Endothelial cell of umbilical vein (primary cell): ENCODE measurements at regions of chr19 and their contacts with region 1.

Region 1: DNA sequence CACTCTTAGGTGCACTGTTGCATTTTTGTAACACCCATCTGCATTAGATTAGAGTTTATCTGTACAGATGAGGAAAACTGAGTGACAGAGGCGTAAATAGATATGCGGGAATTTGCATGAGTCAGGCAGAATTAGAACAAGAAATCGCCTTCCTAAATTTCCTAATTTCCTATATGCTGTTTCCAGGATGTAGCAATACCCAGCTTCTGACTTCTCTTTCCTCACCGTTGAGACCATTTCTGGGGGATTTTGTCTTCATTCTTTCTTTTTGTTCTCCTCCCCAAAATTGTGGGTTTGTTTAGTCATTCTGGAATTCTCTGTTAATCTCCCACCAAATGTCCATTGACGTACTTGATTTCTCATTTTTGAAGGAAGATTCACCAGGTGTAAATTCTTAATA is 10.6 kb upstream of the ZNF792 start:
- DNase-seq: no peak
- H3K4me3 ChIP-seq: no peak overlapping the region
- H3K27ac ChIP-seq: no peak overlapping the region
- H3K4me1 ChIP-seq: no peaks in the 10 kb centered on the region
- H3K27me3 ChIP-seq: no peaks in the 10 kb centered on the region
- CTCF ChIP-seq: no peak
- POLR2A ChIP-seq: no peak

Region 2: DNA sequence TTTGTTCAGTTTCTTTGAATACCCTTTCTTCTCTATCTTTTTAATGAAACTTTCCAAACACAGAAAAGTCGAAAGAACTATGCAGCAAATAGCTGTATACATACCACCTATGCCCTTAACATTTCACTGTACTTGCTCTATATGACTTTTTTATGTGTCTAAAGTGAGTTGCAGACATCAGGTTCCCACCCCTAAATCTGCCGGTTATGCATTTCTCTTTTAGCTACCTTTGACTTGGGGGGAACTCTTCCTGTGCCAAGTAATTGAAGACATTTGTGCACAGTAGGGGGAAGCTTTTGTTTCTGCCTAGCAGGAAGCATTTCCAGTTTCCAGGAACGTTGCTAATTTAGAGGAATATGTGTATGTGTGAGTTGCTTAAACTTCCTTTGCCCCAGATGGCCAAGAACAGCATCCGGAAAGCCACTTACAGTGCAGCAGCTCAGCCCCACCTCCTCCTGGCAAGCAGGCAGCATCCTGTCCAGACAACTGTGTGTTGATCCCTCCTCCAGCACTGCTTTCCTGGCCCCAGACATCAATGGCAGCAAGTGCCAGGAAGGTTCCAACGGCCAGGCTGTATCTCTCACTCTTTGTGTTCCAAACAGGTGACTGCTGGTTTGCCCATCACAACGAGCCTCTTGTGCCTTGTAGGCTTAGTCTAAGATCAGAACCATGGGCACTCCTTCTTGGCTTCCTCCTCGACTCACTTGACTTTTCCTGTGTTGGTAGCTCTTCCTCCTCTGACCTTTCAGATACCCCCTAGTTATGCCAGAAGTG is 10.8 kb after region 1 on chr19:
- CTCF ChIA-PET with region 1: interaction called, 11 read pairs
- POLR2A ChIA-PET with region 1: no interaction called
- dilution Hi-C with region 1: no loop called
- intact Hi-C with region 1: no loop called
- DNase-seq: peak; percentile 89
- H3K4me3 ChIP-seq: peak overlapping the region in 1 of 3 experiments; percentile 0
- H3K27ac ChIP-seq: peak overlapping the region; percentile 34
- H3K4me1 ChIP-seq: peaks cover 15% of the 10 kb centered on the region
- H3K27me3 ChIP-seq: no peaks in the 10 kb centered on the region
- CTCF ChIP-seq: no peak
- POLR2A ChIP-seq: no peak

Region 3: GRCh38 chr19:34999498-35000341 is 25.1 kb after region 1 on chr19 and contains the start of gene GRAMD1A:
- CTCF ChIA-PET with region 1: interaction called, 40 read pairs
- POLR2A ChIA-PET with region 1: interaction called, 8 read pairs
- dilution Hi-C with region 1: no loop called
- intact Hi-C with region 1: loop called (anchors 1 kb)
- DNase-seq: peak; percentile 87
- H3K4me3 ChIP-seq: peak within 1 kb of the TSS; percentile 75 to 91 (median 83)
- H3K27ac ChIP-seq: peak within 1 kb of the TSS; percentile 89
- H3K4me1 ChIP-seq: peaks cover 66% of the 10 kb centered on the region
- H3K27me3 ChIP-seq: no peaks in the 10 kb centered on the region
- CTCF ChIP-seq: no peak
- POLR2A ChIP-seq: peak; percentile 84
- total RNA-seq, gene GRAMD1A: 130 and 139 TPM in 2 replicates

Region 4: DNA sequence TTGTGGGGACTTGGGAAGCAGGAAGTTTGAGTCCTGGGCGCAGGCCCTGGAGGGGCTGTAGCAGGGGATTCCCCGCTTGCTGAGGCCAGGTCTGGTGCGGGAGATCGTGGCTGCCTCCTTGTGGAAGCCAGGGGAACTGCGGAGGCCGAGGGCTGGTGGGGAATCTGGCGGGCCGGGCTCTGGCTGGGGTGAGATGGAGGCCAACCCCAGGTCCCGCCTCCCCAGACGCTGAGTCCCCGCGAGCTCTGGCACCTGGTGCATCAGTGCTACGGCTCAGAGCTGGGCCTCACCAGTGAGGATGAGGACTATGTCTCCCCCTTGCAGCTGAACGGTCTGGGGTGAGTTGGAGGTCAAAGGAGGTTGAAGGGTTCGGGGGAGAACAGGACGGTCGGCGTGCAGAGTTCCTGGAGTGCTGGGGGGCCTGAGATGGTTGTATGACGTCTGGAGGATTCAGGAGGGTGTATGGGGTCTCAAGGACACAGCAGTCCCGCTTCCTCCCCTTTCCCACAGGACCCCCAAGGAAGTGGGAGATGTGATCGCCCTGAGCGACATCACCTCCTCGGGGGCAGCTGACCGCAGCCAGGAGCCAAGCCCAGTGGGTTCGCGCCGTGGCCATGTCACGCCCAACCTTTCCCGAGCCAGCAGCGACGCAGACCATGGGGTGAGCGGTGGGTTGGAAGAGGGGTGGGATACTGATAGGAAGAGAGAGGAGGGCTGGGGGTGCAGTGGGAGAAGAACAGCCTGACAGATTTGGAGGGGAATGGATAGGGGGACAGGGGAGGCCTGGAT is 38.6 kb after region 1 on chr19:
- CTCF ChIA-PET with region 1: interaction called, 129 read pairs
- POLR2A ChIA-PET with region 1: no interaction called
- dilution Hi-C with region 1: no loop called
- intact Hi-C with region 1: loop called (anchors 1 kb)
- DNase-seq: peak; percentile 75
- H3K4me3 ChIP-seq: no peak overlapping the region
- H3K27ac ChIP-seq: peak overlapping the region; percentile 10
- H3K4me1 ChIP-seq: peaks cover 3% of the 10 kb centered on the region
- H3K27me3 ChIP-seq: no peaks in the 10 kb centered on the region
- CTCF ChIP-seq: peak; percentile 98 to 99
- POLR2A ChIP-seq: no peak

Region 5: GRCh38 chr19:35030257-35031071 is 55.8 kb after region 1 on chr19 and contains the start of gene SCN1B:
- CTCF ChIA-PET with region 1: interaction called, 8 read pairs
- POLR2A ChIA-PET with region 1: no interaction called
- dilution Hi-C with region 1: no loop called
- intact Hi-C with region 1: loop called (anchors 5 kb)
- DNase-seq: peak; percentile 51
- H3K4me3 ChIP-seq: peak within 1 kb of the TSS; percentile 42 to 71 (median 47)
- H3K27ac ChIP-seq: no peak within 1 kb of the TSS
- H3K4me1 ChIP-seq: peaks cover 2% of the 10 kb centered on the region
- H3K27me3 ChIP-seq: no peaks in the 10 kb centered on the region
- CTCF ChIP-seq: no peak
- POLR2A ChIP-seq: no peak
- total RNA-seq, gene SCN1B: 14.2 and 15.8 TPM in 2 replicates

Region 6: GRCh38 chr19:35090506-35091237 is 116.0 kb after region 1 on chr19:
- CTCF ChIA-PET with region 1: interaction called, 4 read pairs
- POLR2A ChIA-PET with region 1: no interaction called
- dilution Hi-C with region 1: no loop called
- intact Hi-C with region 1: loop called (anchors 1 kb)
- DNase-seq: peak; percentile 57
- H3K4me3 ChIP-seq: no peak overlapping the region
- H3K27ac ChIP-seq: no peak overlapping the region
- H3K4me1 ChIP-seq: no peaks in the 10 kb centered on the region
- H3K27me3 ChIP-seq: peaks cover 1 to 2% of the 10 kb centered on the region in 2 experiments
- CTCF ChIP-seq: peak; percentile 41 to 66
- POLR2A ChIP-seq: no peak